Tibial artery (tissue), 4 donors: ENCODE measurements at regions of chr10 and their contacts with region 1.

Region 1: GRCh38 chr10:120942806-120943413 is 91.7 kb downstream of the WDR11 start:
- DNase-seq: peak; percentile 74 to 83
- H3K4me3 ChIP-seq: no peak overlapping the region
- H3K27ac ChIP-seq: no peak overlapping the region
- H3K4me1 ChIP-seq: peaks cover 0 to 13% (median 2%) of the 10 kb centered on the region in 4 donors
- H3K27me3 ChIP-seq: peaks cover 0 to 13% of the 10 kb centered on the region in 2 donors
- CTCF ChIP-seq: peak; percentile 84 to 90

Region 2: GRCh38 chr10:120098232-120098930 is 844.5 kb before region 1 on chr10:
- intact Hi-C with region 1: no loop called
- DNase-seq: no peak
- H3K4me3 ChIP-seq: no peak overlapping the region
- H3K27ac ChIP-seq: no peak overlapping the region
- H3K4me1 ChIP-seq: no peaks in the 10 kb centered on the region
- H3K27me3 ChIP-seq: no peaks in the 10 kb centered on the region
- CTCF ChIP-seq: no peak

Region 3: GRCh38 chr10:120873734-120874133 is 69.2 kb before region 1 on chr10:
- intact Hi-C with region 1: no loop called
- DNase-seq: no peak
- H3K4me3 ChIP-seq: no peak overlapping the region
- H3K27ac ChIP-seq: no peak overlapping the region
- H3K4me1 ChIP-seq: no peaks in the 10 kb centered on the region
- H3K27me3 ChIP-seq: no peaks in the 10 kb centered on the region
- CTCF ChIP-seq: no peak

Region 4: GRCh38 chr10:121886997-121887622 is 944.2 kb after region 1 on chr10:
- intact Hi-C with region 1: loop called (anchors 5 kb)
- DNase-seq: peak in 1 of 2 donors; percentile 24
- H3K4me3 ChIP-seq: no peak overlapping the region
- H3K27ac ChIP-seq: no peak overlapping the region
- H3K4me1 ChIP-seq: no peaks in the 10 kb centered on the region
- H3K27me3 ChIP-seq: no peaks in the 10 kb centered on the region
- CTCF ChIP-seq: peak; percentile 53 to 59

Region 5: GRCh38 chr10:121900443-121901174 is 957.7 kb after region 1 on chr10:
- intact Hi-C with region 1: loop called (anchors 5 kb)
- DNase-seq: no peak
- H3K4me3 ChIP-seq: no peak overlapping the region
- H3K27ac ChIP-seq: no peak overlapping the region
- H3K4me1 ChIP-seq: no peaks in the 10 kb centered on the region
- H3K27me3 ChIP-seq: no peaks in the 10 kb centered on the region
- CTCF ChIP-seq: peak; percentile 62 to 67